ENCODE measurements at regions of chr1 and their contacts with region 1.

Region 1: GRCh38 chr1:224182866-224183590 is at the start of gene DEGS1:
- DNase-seq: peak; percentile 42 to 92
- H3K4me3 ChIP-seq: peak within 1 kb of the TSS; percentile 77 to 96
- H3K27ac ChIP-seq: peak within 1 kb of the TSS; percentile 92 to 96
- H3K4me1 ChIP-seq: peaks cover 4 to 23% of the 10 kb centered on the region in 2 donors
- H3K27me3 ChIP-seq: no peaks in the 10 kb centered on the region
- CTCF ChIP-seq: no peak
- total RNA-seq, gene DEGS1: 68.1 TPM

Region 2: DNA sequence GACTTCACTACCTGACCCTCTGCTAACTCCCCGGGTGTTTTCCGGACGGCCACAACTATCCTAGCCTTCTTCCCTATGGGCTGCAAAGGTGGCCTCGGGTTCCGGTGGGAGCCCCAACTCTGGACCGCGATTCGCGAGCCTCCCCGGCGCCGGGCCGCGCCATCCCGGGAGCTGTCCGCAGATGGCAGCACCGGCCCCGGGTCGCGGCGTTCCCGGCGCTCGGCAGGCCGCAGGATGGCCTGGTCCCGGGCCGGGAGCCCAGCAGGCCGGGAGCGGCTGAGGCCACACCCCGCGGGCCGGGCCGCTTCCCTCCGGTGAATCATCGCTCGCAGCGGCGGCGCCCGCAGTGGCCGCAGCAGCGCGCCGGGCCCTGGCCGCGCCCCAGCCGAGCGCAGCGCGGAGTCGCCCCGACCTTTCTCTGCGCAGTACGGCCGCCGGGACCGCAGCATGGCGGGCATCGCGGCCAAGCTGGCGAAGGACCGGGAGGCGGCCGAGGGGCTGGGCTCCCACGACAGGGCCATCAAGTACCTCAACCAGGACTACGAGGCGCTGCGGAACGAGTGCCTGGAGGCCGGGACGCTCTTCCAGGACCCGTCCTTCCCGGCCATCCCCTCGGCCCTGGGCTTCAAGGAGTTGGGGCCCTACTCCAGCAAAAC is 470.7 kb before region 1 on chr1 and contains the start of gene CAPN2:
- intact Hi-C with region 1: loop called (anchors 10 kb)
- DNase-seq: peak in 1 of 2 donors; percentile 92
- H3K4me3 ChIP-seq: peak within 1 kb of the TSS; percentile 74 to 96
- H3K27ac ChIP-seq: peak within 1 kb of the TSS; percentile 89 to 95
- H3K4me1 ChIP-seq: peaks cover 14 to 45% of the 10 kb centered on the region in 2 donors
- H3K27me3 ChIP-seq: no peaks in the 10 kb centered on the region
- CTCF ChIP-seq: peak; percentile 63 to 94 (median 76)
- total RNA-seq, gene CAPN2: 178 TPM

Region 3: GRCh38 chr1:224113918-224114786 is 68.9 kb before region 1 on chr1 and contains the start of gene FBXO28:
- intact Hi-C with region 1: loop called (anchors 1 kb)
- DNase-seq: peak; percentile 87 to 97
- H3K4me3 ChIP-seq: peak within 1 kb of the TSS; percentile 85
- H3K27ac ChIP-seq: peak within 1 kb of the TSS; percentile 92 to 96
- H3K4me1 ChIP-seq: peaks cover 5 to 14% of the 10 kb centered on the region in 2 donors
- H3K27me3 ChIP-seq: no peaks in the 10 kb centered on the region
- CTCF ChIP-seq: no peak
- total RNA-seq, gene FBXO28: 4.8 TPM

Region 4: DNA sequence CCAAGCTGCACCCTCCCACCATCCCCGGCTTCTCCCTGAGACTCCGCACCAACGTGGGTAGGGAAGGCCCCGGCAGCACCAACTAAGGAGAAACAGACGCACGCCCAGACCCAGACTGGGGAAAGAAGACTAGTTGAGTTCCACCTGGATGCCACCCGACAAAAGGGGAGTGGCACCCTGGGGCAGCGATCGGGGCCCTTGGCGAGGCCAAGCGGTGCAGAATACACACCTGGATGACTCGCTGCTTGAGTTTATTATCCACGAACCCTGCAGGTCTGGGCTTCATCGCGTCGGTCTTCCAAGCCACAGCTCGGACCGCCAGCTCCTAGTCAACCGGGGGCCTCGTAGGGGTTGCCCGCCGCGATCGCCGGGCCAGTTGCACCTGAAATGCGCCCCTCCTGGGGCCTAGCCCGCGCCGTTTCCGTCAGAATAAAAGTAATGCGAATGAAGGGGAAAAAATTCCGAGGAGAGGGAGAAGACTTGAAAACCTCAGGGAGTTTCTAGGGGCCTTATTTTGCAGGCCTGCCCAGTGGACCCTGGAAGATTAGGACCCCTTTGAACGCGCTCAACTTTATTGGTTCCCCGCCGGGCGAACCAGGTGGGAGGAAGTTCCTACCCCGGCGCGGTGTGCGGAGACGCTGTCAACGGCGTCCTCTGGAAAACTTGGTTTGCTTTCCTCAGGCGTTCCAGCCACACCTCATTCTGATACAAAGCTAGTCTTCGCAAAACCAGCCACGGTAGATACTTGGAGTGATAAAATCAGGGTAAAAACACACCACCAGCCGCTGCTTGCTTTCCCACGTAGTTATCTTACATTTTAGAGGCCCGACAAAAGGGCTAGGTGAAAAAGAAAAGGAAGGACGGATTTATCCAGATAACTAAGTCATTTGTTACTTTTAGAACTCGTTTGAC is 147.1 kb after region 1 on chr1 and contains the start of gene NVL:
- intact Hi-C with region 1: loop called (anchors 5 kb)
- DNase-seq: peak; percentile 12 to 86
- H3K4me3 ChIP-seq: peak within 1 kb of the TSS; percentile 79 to 83
- H3K27ac ChIP-seq: peak within 1 kb of the TSS; percentile 83 to 91
- H3K4me1 ChIP-seq: peaks cover 0 to 18% of the 10 kb centered on the region in 2 donors
- H3K27me3 ChIP-seq: no peaks in the 10 kb centered on the region
- CTCF ChIP-seq: no peak
- total RNA-seq, gene NVL: 34.6 TPM

Measured in ascending aorta (tissue), 2 donors.